ENCODE measurements at regions of chr19 and their contacts with region 1.

Region 1: GRCh38 chr19:48646001-48646721 is at the start of gene CA11:
- DNase-seq: no peak
- H3K4me3 ChIP-seq: peak within 1 kb of the TSS; percentile 57
- CTCF ChIP-seq: peak; percentile 95

Region 2: DNA sequence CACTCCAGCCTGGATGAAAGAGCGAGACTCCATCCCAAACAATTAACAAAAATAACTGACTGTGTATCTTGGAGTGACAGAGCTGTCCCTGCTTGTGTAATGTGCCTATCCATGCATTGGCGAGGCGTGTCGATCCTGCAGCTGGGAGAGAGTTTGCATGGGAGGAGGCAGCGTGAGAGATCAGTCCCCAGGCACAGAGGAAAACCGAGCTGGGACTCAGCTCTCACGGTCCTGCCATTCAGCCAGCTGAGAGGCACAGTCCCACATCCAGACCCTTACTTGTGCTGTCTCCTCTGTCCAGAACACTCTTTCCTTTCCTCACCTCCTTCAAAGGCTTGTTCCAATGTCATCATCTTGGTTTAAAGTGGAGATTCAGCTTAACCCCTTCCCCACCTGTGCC is 106.1 kb before region 1 on chr19:
- CTCF ChIA-PET with region 1: no interaction called
- POLR2A ChIA-PET with region 1: no interaction called
- DNase-seq: no peak
- H3K4me3 ChIP-seq: no peak overlapping the region
- CTCF ChIP-seq: no peak

Region 3: DNA sequence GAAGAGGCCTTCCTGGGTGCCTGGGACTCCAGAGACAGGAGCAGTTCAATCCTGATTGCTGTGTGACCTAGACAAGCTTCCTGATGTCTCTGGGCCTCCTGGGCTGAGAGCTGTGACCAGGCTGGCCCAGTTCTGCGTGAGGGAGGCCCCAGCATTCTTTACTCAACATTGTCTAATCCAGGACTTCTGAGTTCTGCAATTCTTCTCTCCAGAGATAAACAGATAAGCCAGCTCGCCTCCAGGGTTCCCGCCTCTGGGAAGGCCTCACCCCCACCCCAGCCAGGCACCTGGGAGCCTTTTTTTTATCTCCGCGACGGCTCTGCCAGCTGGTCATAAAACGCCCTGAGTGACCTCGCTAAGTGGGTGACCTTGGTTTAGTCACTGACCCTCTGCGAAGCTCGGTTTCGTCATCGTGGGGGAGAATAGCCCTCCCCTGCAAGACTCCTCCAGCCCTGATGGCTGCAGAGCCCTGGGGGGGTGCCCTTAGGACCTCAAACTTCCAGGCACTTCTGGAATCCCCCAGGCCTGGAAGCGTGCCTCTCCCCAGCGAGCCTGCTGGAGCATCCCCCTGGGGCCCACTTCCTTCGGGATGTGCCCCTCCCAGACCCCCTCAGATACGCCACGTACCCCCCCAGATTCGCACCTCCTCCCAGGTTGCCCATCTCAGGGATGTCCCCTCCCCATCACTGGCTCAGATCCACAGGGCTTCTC is 92.3 kb before region 1 on chr19:
- CTCF ChIA-PET with region 1: no interaction called
- POLR2A ChIA-PET with region 1: no interaction called
- DNase-seq: no peak
- H3K4me3 ChIP-seq: no peak overlapping the region
- CTCF ChIP-seq: no peak

Region 4: DNA sequence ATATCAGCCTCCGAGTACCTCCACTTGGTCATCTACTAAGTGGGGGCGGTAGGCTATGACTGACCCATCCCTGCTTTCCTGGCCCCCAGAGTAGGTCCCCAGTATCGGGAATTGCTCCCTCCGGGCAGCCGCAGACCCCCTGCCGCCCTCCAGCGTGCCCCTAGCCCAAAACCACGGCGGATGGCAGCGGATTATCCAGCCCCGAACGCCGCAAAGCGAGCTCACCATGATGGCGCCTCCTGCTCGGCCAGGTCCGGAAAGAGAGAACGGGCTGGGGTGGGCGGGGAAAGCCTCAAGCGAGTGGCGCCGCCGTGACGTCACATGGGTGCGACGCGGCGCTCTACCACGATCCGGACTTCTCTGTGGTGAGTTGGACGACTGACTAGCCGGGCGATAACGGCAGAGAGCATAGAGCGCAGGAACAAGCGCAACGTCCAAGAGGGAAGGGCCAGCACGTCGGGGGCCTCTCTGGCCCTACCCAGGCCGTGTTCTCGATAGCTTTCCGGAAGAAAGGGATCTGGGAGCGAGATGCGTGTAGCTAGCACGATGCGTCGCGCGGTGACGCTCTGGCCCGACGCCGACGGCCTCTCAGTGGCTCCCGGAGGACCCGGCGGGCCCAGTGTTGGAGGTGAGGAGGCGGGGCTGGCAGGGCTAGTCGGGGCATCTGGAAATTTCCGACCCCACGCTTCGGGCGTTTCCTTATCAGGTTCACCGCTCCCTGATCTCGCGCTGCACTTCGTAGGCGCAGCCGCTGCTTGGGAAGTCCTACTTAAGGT is 27.1 kb before region 1 on chr19 and contains the starts of genes RPL18 and SPHK2:
- CTCF ChIA-PET with region 1: no interaction called
- POLR2A ChIA-PET with region 1: no interaction called
- DNase-seq: peak; percentile 99
- H3K4me3 ChIP-seq: peak within 1 kb of the TSS; percentile 97
- CTCF ChIP-seq: no peak

Region 5: DNA sequence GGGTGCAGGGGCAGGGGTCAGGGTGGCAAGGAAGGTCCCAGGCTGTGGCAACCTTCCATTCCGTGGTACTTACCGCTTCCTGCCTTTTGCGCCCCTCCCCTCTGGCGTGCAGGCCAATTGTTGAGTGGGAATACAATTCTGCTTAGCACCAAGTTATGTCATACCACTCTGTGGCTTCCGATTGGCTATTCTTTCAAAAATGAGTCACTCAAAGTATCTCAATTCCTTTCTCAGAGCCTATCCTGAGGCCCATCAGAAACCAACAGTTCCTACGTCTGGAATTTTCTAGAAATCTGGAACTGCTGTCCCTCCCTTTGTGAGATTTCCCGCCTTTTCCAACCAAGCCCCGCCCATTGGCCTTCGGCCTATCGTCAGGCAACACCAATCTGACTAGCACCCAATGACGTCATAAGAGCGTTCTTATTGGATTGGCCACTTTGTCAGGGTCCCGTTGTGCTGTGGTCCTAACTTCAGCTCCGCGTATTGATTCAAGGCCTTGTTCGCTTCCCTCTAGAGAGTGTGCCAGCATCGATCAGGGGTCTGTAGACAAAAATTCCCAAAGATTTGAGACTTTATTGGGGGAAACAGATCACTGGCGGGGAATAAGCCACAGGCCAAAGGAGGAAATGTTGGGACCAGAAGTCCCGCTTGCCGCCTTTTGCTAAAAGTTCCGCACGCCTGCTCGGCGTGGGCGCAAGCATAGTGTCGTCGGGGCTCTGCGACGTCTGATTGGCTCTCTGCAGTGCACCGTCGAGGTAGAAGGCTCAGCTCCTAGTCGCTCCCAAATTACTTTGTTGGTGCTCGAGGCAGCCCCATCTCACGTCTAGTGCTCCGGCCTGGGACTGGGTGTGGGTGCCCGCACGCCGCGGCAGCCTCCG is 14.9 kb after region 1 on chr19:
- CTCF ChIA-PET with region 1: interaction called, 21 read pairs
- POLR2A ChIA-PET with region 1: no interaction called
- DNase-seq: no peak
- H3K4me3 ChIP-seq: no peak overlapping the region
- CTCF ChIP-seq: no peak

Region 6: GRCh38 chr19:48780631-48781391 is 134.7 kb after region 1 on chr19:
- CTCF ChIA-PET with region 1: interaction called, 22 read pairs
- POLR2A ChIA-PET with region 1: no interaction called
- DNase-seq: no peak
- H3K4me3 ChIP-seq: no peak overlapping the region
- CTCF ChIP-seq: no peak

Measured in AG04449 (cell line).